ENCODE measurements at regions of chr7 and their contacts with region 1.

Region 1: DNA sequence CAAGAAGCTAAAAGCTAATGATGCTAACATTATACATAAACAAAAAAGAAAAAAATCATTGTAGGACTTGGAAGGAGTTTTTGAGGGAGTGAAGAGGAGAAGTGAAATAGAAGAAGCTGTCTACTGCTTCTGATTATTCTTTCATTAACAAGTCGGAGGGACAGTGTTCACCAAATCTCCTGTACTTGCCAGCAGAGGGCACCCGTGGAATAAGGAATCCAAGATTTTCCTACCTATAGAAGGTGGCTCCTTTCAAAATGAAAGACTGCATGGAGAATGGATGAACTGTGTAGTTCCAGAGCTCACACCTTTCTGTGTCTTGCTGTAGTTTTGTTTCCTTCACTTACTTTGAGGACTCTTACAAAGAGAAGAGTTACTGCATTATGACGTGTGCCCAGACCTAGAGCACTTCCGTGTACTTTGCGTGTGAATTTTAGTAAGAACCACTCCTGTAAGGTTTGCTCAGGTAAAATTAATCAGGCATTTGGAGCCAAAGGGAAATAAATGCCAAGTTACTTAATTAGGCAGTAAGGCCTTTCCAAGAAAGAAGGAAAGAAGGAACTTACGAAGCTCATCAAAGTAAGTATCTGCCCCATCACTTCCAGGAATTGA is 145.1 kb downstream of the SEMA3D start:
- DNase-seq: peak; percentile 63 to 78
- H3K4me3 ChIP-seq: no peak overlapping the region
- H3K27ac ChIP-seq: no peak overlapping the region
- H3K4me1 ChIP-seq: no peaks in the 10 kb centered on the region
- H3K27me3 ChIP-seq: no peaks in the 10 kb centered on the region
- CTCF ChIP-seq: peak; percentile 64 to 67

Region 2: GRCh38 chr7:85186521-85187241 is 145.0 kb after region 1 on chr7 and contains the start of gene SEMA3D:
- intact Hi-C with region 1: loop called (anchors 5 kb)
- DNase-seq: peak; percentile 63 to 87
- H3K4me3 ChIP-seq: peak within 1 kb of the TSS; percentile 64 to 69
- H3K27ac ChIP-seq: peak within 1 kb of the TSS; percentile 75 to 88
- H3K4me1 ChIP-seq: peaks cover 0 to 25% (median 14%) of the 10 kb centered on the region in 4 donors
- H3K27me3 ChIP-seq: no peaks in the 10 kb centered on the region
- CTCF ChIP-seq: peak; percentile 66 to 85

Region 3: GRCh38 chr7:85554236-85555178 is 512.8 kb after region 1 on chr7:
- intact Hi-C with region 1: loop called (anchors 5 kb)
- DNase-seq: no peak
- H3K4me3 ChIP-seq: no peak overlapping the region
- H3K27ac ChIP-seq: no peak overlapping the region
- H3K4me1 ChIP-seq: no peaks in the 10 kb centered on the region
- H3K27me3 ChIP-seq: no peaks in the 10 kb centered on the region
- CTCF ChIP-seq: peak; percentile 65 to 74

Measured in tibial artery (tissue), 4 donors.